Activated CD4-positive, alpha-beta T cell treated with anti-CD3 and anti-CD28 coated beads, Interleukin-2, amount 10 ng/mL, durations not matched to agents 7 days and 5 days (primary cell): ENCODE measurements at regions of chr14 and their contacts with region 1.

Region 1: DNA sequence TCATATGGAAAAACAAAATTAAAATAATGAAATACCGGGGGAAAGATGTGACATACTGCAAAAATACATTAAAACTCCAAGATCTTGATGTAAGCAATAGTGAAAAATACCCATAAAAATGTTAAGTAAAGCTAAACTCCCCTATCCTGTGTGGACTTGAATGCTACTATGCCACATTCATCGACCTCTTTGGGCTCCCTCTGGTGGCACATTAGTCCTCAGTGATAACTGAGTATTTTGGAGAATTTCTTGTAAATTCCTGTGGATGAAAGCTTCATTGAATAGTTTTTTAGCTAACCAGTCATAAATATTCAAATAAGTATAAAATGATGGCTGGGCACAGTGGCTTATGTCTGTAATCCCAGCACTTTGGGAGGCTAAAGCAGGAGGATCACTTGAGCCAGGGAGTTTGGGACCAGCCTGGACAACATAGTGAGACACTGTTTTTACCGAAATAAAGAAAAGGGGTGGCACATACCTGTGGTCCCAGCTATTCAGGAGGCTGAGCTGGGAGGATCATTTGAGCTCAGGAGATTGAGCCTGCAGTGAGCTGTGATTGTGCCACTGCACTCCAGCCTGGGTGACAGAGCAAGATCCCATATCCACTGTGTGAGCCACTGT is 42.4 kb upstream of the SGPP1 start:
- DNase-seq: peak; percentile 77
- H3K4me3 Mint-ChIP-seq: no peak overlapping the region
- H3K27ac Mint-ChIP-seq: no peak overlapping the region
- H3K4me1 Mint-ChIP-seq: peaks cover 13% of the 10 kb centered on the region
- H3K27me3 Mint-ChIP-seq: no peaks in the 10 kb centered on the region

Region 2: DNA sequence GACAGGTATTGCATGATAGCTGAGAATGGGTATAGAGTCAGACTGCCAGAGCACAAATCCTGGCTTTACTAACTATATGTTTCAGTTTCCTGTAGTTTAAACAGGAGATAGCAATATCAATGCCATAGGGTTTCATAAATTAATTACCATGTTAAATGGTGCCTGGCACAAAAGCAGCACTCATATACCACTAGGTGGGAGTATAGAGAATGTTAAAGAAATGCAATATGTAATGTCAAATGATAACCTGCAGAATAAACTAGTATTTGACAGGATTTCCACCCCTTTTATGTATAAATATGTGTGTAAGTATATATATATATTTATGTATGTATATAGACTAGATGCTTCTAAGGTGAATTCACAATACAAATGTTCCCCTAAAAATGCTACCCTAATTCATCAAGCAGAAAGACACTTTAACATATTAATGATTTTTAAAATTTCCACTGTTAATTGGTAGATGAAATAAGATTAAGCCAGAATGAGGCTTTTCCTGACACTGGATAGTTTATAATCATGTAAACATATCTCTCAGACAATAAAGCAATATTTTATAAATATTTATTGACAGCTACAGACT is 137.3 kb before region 1 on chr14:
- CTCF ChIA-PET with region 1: interaction called, 11 read pairs
- POLR2A ChIA-PET with region 1: no interaction called
- DNase-seq: peak; percentile 26
- H3K4me3 Mint-ChIP-seq: no peak overlapping the region
- H3K27ac Mint-ChIP-seq: no peak overlapping the region
- H3K4me1 Mint-ChIP-seq: peaks cover 29% of the 10 kb centered on the region
- H3K27me3 Mint-ChIP-seq: no peaks in the 10 kb centered on the region

Region 3: GRCh38 chr14:63901434-63902085 is 131.3 kb after region 1 on chr14:
- CTCF ChIA-PET with region 1: no interaction called
- POLR2A ChIA-PET with region 1: no interaction called
- DNase-seq: no peak
- H3K4me3 Mint-ChIP-seq: no peak overlapping the region
- H3K27ac Mint-ChIP-seq: peak overlapping the region; percentile 55
- H3K4me1 Mint-ChIP-seq: peaks cover 40% of the 10 kb centered on the region
- H3K27me3 Mint-ChIP-seq: no peaks in the 10 kb centered on the region